ENCODE measurements at regions of chr6 and their contacts with region 1.

Region 1: GRCh38 chr6:86856937-86857563 is 80.3 kb upstream of the HTR1E start:
- DNase-seq: peak; percentile 11
- H3K4me3 ChIP-seq: no peak overlapping the region
- H3K27ac ChIP-seq: no peak overlapping the region
- H3K4me1 ChIP-seq: no peaks in the 10 kb centered on the region
- H3K27me3 ChIP-seq: no peaks in the 10 kb centered on the region
- CTCF ChIP-seq: peak; percentile 48 to 64 (median 54)
- EP300 ChIP-seq: no peak
- POLR2A ChIP-seq: no peak

Region 2: GRCh38 chr6:85756982-85757381 is 1100.1 kb before region 1 on chr6:
- in situ Hi-C with region 1: loop called in 2 of 4 experiments (anchors 25 kb)
- intact Hi-C with region 1: no loop called
- DNase-seq: no peak
- H3K4me3 ChIP-seq: no peak overlapping the region
- H3K27ac ChIP-seq: no peak overlapping the region
- H3K4me1 ChIP-seq: peaks cover 0 to 8% (median 3%) of the 10 kb centered on the region in 4 donors
- H3K27me3 ChIP-seq: no peaks in the 10 kb centered on the region
- CTCF ChIP-seq: peak in 4 of 5 experiments; percentile 28 to 38 (median 35)
- EP300 ChIP-seq: no peak
- POLR2A ChIP-seq: no peak

Region 3: GRCh38 chr6:86934365-86934764 is 77.3 kb after region 1 on chr6:
- in situ Hi-C with region 1: no loop called
- intact Hi-C with region 1: no loop called
- DNase-seq: no peak
- H3K4me3 ChIP-seq: no peak overlapping the region
- H3K27ac ChIP-seq: no peak overlapping the region
- H3K4me1 ChIP-seq: peaks cover 0 to 4% (median 0%) of the 10 kb centered on the region in 4 donors
- H3K27me3 ChIP-seq: peaks cover 32% of the 10 kb centered on the region
- CTCF ChIP-seq: no peak
- EP300 ChIP-seq: no peak
- POLR2A ChIP-seq: no peak

Region 4: DNA sequence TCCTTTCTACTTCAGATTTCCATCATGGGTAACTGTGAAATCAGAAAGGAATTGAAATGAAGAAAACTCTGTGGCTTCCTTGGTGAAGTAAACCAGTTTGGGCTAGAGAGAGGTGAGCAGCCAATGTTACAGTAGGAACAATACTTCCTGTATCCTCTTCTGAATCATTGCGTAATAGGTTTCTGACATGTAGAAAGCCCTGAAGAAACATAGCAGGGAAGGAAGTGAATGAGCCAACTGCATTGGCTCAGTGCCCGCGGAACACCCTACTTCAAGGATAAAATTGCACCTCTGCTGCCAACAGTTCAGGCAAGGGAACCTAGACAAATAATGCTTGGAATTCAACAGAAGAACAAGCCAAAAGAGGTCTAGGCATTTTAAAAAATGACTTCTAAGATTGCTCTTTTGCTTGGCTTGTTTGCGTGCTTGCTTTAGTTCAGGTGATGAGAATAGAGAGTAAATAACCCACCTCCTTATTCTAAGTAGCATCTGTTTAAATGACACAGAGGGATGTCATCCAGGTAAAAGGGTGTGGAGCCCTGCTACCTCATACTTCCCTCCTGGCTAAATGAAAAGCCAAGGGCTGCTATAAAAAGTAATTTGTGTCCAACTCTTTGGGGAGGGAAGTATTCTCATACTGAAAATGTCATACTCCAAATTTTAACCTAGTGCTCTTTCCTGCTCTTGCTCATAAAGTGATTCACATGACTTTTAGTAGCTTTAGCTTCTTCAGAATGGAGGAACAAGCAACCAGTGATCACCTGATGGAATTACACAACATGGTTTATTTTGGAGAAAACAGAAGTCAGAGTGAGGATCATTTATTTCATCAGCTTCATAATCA is 875.0 kb after region 1 on chr6:
- in situ Hi-C with region 1: no loop called
- intact Hi-C with region 1: loop called (anchors 10 kb)
- DNase-seq: peak; percentile 94
- H3K4me3 ChIP-seq: no peak overlapping the region
- H3K27ac ChIP-seq: peak overlapping the region; percentile 74 to 83 (median 80)
- H3K4me1 ChIP-seq: peaks cover 0 to 48% (median 32%) of the 10 kb centered on the region in 4 donors
- H3K27me3 ChIP-seq: no peaks in the 10 kb centered on the region
- CTCF ChIP-seq: no peak
- EP300 ChIP-seq: no peak
- POLR2A ChIP-seq: no peak

Measured in transverse colon (tissue), 4 donors.